Caco-2 (cell line): ENCODE measurements at regions of chr19 and their contacts with region 1.

Region 1: GRCh38 chr19:43766755-43767043 is 11.9 kb upstream of the SMG9 start:
- DNase-seq: no peak
- H3K4me3 ChIP-seq: no peak overlapping the region
- H3K4me3 Mint-ChIP-seq: no peak overlapping the region
- H3K27ac Mint-ChIP-seq: peak overlapping the region; percentile 68
- H3K4me1 ChIP-seq: peaks cover 5% of the 10 kb centered on the region; the same call in 1 of the 2 replicates
- H3K4me1 Mint-ChIP-seq: peaks cover 19% of the 10 kb centered on the region
- H3K27me3 ChIP-seq: no peaks in the 10 kb centered on the region
- H3K27me3 Mint-ChIP-seq: no peaks in the 10 kb centered on the region
- CTCF ChIP-seq: no peak

Region 2: DNA sequence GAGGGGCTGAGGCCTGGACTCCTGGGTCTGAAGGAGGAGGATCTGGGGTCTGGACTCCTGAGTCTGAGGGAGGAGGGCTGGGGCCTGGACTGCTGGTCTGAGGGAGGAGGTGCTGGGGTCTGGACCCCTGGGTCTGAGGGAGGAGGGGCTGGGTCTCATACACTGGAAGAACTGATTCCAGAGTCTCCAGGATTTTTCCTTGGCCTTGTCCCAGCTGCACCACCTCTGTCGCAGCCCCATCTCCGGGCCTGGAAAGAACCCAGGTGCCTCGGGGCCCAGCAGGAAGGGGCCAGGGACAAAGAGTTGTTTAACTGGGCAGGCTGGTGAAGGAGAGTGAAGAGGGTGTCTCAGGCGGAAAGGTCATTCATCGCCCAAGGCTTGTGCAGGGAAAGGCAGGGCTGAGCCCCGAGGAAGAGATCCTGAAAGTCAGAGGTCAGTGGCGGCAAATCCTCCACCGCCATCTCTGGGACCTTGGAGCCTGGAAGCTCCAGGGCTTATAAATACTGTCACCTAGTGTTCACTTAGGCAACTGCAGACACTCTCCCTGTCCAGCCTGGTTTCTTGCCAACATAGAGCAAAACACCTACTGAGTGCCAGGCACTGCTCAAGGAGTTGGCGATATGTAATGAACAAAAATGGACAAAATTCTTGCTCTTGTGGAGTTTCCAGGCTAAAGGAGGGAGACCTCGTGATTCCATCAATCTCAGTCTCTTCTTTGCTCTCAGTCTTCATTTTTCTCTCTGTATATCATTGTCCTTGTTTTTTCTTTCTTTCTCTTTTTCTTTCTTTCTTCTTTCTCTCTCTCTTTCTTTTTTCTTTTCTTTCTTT is 18.5 kb after region 1 on chr19:
- CTCF ChIA-PET with region 1: interaction called, 4 read pairs
- POLR2A ChIA-PET with region 1: no interaction called
- intact Hi-C with region 1: loop called (anchors 1 kb)
- DNase-seq: peak; percentile 78 to 84
- H3K4me3 ChIP-seq: no peak overlapping the region
- H3K4me3 Mint-ChIP-seq: no peak overlapping the region
- H3K27ac Mint-ChIP-seq: peak overlapping the region; percentile 1
- H3K4me1 ChIP-seq: peaks cover 4% of the 10 kb centered on the region
- H3K4me1 Mint-ChIP-seq: peaks cover 21% of the 10 kb centered on the region
- H3K27me3 ChIP-seq: no peaks in the 10 kb centered on the region
- H3K27me3 Mint-ChIP-seq: no peaks in the 10 kb centered on the region
- CTCF ChIP-seq: peak; percentile 96 to 99